ENCODE measurements at regions of chr21 and their contacts with region 1.

Region 1: GRCh38 chr21:41612674-41613532 is 104.9 kb upstream of the TMPRSS2 start:
- DNase-seq: peak; percentile 60
- ATAC-seq: peak; percentile 74
- H3K4me3 Mint-ChIP-seq: no peak overlapping the region
- H3K27ac Mint-ChIP-seq: no peak overlapping the region
- H3K4me1 Mint-ChIP-seq: no peaks in the 10 kb centered on the region
- H3K27me3 Mint-ChIP-seq: peaks cover 11% of the 10 kb centered on the region

Region 2: DNA sequence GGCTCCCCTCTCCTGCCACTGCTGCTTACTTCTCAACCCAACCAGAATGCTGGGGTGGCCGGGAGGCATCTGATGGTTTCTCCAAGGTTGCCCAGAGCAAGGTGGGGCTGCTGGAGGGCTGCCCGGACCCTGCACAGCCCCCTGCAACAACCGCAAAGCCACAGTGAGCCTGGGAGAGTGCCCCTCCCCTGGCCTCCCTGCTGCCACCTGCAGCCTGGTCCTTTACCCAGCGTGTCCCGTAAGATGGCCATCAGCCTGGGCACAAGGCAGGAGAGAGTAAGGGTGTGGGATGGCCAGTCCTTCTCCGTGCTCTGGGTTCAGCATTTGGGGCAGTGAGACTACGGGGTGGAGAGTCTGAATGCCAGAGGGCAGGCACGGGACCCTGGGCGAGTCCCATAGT is 234.0 kb before region 1 on chr21:
- CTCF ChIA-PET with region 1: no interaction called
- POLR2A ChIA-PET with region 1: no interaction called
- intact Hi-C with region 1: no loop called
- DNase-seq: no peak
- ATAC-seq: no peak
- H3K4me3 Mint-ChIP-seq: no peak overlapping the region
- H3K27ac Mint-ChIP-seq: no peak overlapping the region
- H3K4me1 Mint-ChIP-seq: peaks cover 11% of the 10 kb centered on the region
- H3K27me3 Mint-ChIP-seq: no peaks in the 10 kb centered on the region

Region 3: GRCh38 chr21:41777951-41778874 is 165.3 kb after region 1 on chr21:
- CTCF ChIA-PET with region 1: interaction called, 5 read pairs
- POLR2A ChIA-PET with region 1: no interaction called
- intact Hi-C with region 1: loop called (anchors 1 kb)
- DNase-seq: peak; percentile 63
- ATAC-seq: no peak
- H3K4me3 Mint-ChIP-seq: no peak overlapping the region
- H3K27ac Mint-ChIP-seq: no peak overlapping the region
- H3K4me1 Mint-ChIP-seq: peaks cover 6% of the 10 kb centered on the region
- H3K27me3 Mint-ChIP-seq: peaks cover 55% of the 10 kb centered on the region

Region 4: GRCh38 chr21:41816220-41817165 is 203.6 kb after region 1 on chr21:
- CTCF ChIA-PET with region 1: interaction called, 3 read pairs
- POLR2A ChIA-PET with region 1: no interaction called
- intact Hi-C with region 1: loop called in 1 of 2 experiments (anchors 1 kb)
- DNase-seq: peak; percentile 78
- ATAC-seq: peak; percentile 88
- H3K4me3 Mint-ChIP-seq: no peak overlapping the region
- H3K27ac Mint-ChIP-seq: no peak overlapping the region
- H3K4me1 Mint-ChIP-seq: peaks cover 6% of the 10 kb centered on the region
- H3K27me3 Mint-ChIP-seq: no peaks in the 10 kb centered on the region

Region 5: DNA sequence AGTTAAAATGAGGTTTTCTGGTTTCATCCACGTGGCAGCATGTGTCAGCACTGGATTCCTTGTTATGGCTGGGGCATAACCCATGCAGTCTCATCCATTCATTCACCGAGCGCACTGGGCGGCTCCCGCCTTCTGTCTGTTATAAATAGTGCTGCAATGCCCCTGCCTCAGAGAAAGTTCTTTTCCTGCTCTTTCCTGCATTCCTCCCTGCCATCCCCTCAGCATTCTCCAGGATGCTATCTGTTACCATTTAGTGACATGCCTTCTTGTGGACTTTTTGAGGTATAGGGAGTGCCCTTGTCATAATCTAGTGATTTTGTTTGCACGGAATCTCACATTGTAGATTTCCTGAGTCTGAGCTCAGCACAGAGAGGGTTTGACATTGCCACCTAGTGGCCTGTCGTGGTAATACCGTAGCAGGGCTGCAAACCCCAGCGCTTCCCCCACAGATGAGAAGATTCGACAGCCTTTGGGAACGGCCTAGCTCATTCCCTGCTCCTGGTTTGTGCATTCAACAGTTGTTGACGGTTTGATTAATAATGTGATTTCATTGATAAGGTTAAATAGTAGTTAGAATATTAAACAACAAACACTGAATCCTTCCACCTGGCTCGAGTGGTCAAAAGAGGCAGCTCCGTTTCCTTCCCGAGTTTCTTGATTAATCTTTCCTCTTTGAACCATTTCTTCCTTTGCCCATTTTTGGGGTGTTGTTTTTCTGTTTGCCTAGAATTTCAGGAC is 504.5 kb after region 1 on chr21:
- CTCF ChIA-PET with region 1: interaction called, 9 read pairs
- POLR2A ChIA-PET with region 1: no interaction called
- intact Hi-C with region 1: loop called (anchors 1 to 2 kb)
- DNase-seq: peak; percentile 86
- ATAC-seq: peak; percentile 88
- H3K4me3 Mint-ChIP-seq: no peak overlapping the region
- H3K27ac Mint-ChIP-seq: no peak overlapping the region
- H3K4me1 Mint-ChIP-seq: peaks cover 10% of the 10 kb centered on the region
- H3K27me3 Mint-ChIP-seq: peaks cover 43% of the 10 kb centered on the region